Ovary (tissue), 10 donors: ENCODE measurements at regions of chr12 and their contacts with region 1.

Region 1: DNA sequence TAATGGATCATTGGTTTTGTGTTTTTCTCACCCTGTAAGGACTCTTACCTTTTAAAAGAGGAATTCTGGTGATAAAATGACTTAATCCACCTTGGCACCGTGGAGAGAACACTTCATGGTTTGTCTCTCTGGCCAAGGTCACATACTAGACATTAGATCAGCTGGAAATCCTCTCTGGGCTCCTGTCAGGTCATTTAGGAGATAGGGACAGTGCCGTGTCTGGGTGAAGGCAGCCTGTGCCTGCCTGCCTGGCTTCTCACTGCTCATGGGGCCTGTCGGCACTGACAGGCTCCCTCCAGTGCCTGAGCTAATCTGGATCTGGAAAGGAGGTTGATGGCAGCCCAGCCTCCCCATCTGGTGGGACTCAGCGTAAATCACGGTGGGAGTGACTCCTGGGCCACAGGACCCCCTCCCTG is 5.7 kb downstream of the CRADD start:
- DNase-seq: peak; percentile 33 to 67 (median 35)
- H3K4me3 ChIP-seq: no peak overlapping the region
- H3K27ac ChIP-seq: peak overlapping the region in 1 of 2 donors; percentile 58
- H3K4me1 ChIP-seq: peaks cover 15% of the 10 kb centered on the region
- H3K27me3 ChIP-seq: no peaks in the 10 kb centered on the region
- CTCF ChIP-seq: no peak
- EP300 ChIP-seq: no peak
- POLR2A ChIP-seq: no peak

Region 2: GRCh38 chr12:93733358-93733757 is 50.5 kb after region 1 on chr12:
- intact Hi-C with region 1: loop called in 2 of 4 experiments (anchors 10 kb)
- DNase-seq: no peak
- H3K4me3 ChIP-seq: no peak overlapping the region
- H3K27ac ChIP-seq: no peak overlapping the region
- H3K4me1 ChIP-seq: peaks cover 3% of the 10 kb centered on the region
- H3K27me3 ChIP-seq: no peaks in the 10 kb centered on the region
- CTCF ChIP-seq: no peak
- EP300 ChIP-seq: no peak
- POLR2A ChIP-seq: no peak

Region 3: GRCh38 chr12:93742110-93742934 is 59.5 kb after region 1 on chr12:
- intact Hi-C with region 1: loop called (anchors 10 kb)
- DNase-seq: peak; percentile 76 to 87 (median 82)
- H3K4me3 ChIP-seq: peak overlapping the region; percentile 49
- H3K27ac ChIP-seq: peak overlapping the region; percentile 57 to 77
- H3K4me1 ChIP-seq: peaks cover 5% of the 10 kb centered on the region
- H3K27me3 ChIP-seq: no peaks in the 10 kb centered on the region
- CTCF ChIP-seq: peak in 2 of 3 donors; percentile 25 to 39
- EP300 ChIP-seq: peak; percentile 46
- POLR2A ChIP-seq: no peak